Heart left ventricle (tissue), 16 donors: ENCODE measurements at regions of chr7 and their contacts with region 1.

Region 1: DNA sequence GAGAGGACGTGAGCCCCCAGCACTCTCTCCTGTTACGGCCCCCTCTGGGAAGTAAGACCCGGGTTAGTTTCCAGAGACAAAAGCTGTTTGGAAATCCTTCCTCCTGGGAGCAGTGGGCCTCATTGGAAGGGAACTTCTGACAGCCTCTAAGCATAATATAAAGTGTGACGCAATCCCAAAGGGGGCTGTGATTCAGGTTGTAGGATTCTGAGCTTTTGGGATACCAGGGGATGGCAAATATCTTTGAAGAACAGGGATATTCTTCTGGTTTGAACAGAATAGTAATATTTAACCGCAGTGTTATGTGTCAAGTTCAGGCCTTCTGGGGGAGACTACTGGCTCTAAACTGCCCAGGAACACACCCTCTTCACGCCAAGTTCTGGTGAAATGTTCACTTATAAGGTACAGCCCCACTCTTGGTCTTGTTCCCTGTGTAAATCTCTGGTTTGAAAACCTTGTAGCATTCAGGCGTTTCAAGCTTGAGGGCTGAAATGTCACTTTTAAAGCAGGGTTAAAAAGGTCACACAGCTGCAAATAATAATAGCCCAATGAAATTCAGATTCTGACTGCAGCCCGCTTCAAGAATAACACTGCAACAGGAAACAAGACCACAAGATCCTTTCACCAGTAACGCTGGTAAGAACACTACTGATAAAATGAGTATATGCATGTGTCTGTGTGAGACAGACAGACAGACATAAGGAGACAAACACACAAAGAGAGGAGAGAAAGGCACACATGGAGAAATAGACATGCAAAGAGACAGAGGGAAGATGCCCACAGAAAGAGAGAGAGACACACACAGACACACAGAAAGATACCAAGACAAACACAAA is 69.0 kb downstream of the CREB5 start:
- DNase-seq: no peak
- ATAC-seq: peak in 2 of 4 donors; percentile 42 to 66
- H3K4me3 ChIP-seq: no peak overlapping the region
- H3K27ac ChIP-seq: no peak overlapping the region
- H3K4me1 ChIP-seq: peaks cover 0 to 22% (median 8%) of the 10 kb centered on the region in 12 donors
- H3K27me3 ChIP-seq: no peaks in the 10 kb centered on the region
- CTCF ChIP-seq: no peak
- POLR2A ChIP-seq: no peak

Region 2: GRCh38 chr7:28269700-28270361 is 211.5 kb before region 1 on chr7:
- intact Hi-C with region 1: no loop called
- DNase-seq: no peak
- ATAC-seq: no peak
- H3K4me3 ChIP-seq: no peak overlapping the region
- H3K27ac ChIP-seq: no peak overlapping the region
- H3K4me1 ChIP-seq: peaks cover 0 to 5% (median 0%) of the 10 kb centered on the region in 12 donors
- H3K27me3 ChIP-seq: no peaks in the 10 kb centered on the region
- CTCF ChIP-seq: no peak
- POLR2A ChIP-seq: no peak

Region 3: DNA sequence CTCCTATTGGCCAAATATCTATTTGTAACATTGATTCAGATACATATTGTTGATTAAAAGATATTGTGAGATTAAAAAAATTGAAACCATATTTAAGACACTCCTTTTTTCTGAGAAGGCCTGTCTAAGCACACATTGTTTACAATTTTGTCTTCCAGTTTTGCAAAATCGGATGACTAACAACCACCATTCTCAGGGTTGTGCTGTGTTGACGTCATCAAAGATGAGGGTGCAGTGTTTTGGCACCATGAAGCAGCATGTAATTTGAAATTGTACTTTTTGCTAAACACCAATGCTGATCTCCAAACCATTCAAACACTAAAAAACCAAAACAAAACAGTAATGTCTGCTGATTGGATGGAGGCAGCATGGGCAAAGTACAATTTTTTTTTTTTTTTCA is 61.6 kb before region 1 on chr7:
- intact Hi-C with region 1: loop called in 1 of 10 experiments (anchors 2 kb)
- DNase-seq: no peak
- ATAC-seq: peak in 2 of 4 donors; percentile 10 to 44
- H3K4me3 ChIP-seq: no peak overlapping the region
- H3K27ac ChIP-seq: no peak overlapping the region
- H3K4me1 ChIP-seq: peaks cover 0 to 40% (median 5%) of the 10 kb centered on the region in 12 donors
- H3K27me3 ChIP-seq: no peaks in the 10 kb centered on the region
- CTCF ChIP-seq: no peak
- POLR2A ChIP-seq: no peak

Region 4: GRCh38 chr7:28528899-28529298 is 47.6 kb after region 1 on chr7:
- intact Hi-C with region 1: loop called in 1 of 10 experiments (anchors 5 kb)
- DNase-seq: peak in 3 of 5 donors; percentile 17 to 37 (median 33)
- ATAC-seq: peak; percentile 24 to 53 (median 50)
- H3K4me3 ChIP-seq: no peak overlapping the region
- H3K27ac ChIP-seq: peak overlapping the region in 7 of 12 donors; percentile 13 to 60 (median 56)
- H3K4me1 ChIP-seq: peaks cover 0 to 40% (median 18%) of the 10 kb centered on the region in 12 donors
- H3K27me3 ChIP-seq: no peaks in the 10 kb centered on the region
- CTCF ChIP-seq: no peak
- POLR2A ChIP-seq: no peak